ENCODE measurements at regions of chr15 and their contacts with region 1.

Region 1: DNA sequence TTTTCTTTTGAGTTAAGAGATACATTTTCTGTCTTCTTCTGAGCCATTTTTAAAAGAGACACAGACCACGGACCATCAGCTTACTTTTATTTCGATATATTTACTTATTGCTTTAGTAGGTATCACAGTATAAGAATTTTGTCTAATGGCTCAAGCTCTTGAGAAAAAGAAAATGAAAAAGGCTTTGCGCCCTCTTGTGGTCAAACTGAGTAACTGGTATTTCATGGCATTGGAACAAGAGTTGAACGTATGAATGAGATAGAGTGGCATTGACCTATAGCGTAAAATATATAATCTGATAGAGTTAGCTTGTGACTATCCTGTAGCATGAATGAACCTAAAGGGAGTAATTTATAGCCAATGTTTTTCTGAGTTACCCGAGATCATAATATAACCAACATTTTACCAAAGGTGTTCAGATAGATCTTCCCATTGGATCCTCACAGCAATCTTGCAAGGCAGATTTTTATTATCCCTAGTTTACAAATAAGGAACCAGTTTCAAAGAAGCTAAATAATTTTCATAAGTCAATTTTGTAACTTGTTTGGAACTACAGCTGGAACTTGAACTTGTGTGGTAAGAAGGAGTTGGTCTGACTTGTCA is 154.6 kb downstream of the POLR2M start:
- DNase-seq: peak; percentile 8
- ATAC-seq: peak; percentile 69
- H3K4me3 ChIP-seq: no peak overlapping the region
- H3K27ac ChIP-seq: no peak overlapping the region
- H3K4me1 ChIP-seq: no peaks in the 10 kb centered on the region
- H3K27me3 ChIP-seq: peaks cover 0 to 1% of the 10 kb centered on the region in 2 experiments; a peak in 1 of 4 replicates
- CTCF ChIP-seq: peak; percentile 63 to 75 (median 74)
- EP300 ChIP-seq: no peak
- POLR2A ChIP-seq: no peak
- RAD21 ChIP-seq: peak; percentile 59

Region 2: DNA sequence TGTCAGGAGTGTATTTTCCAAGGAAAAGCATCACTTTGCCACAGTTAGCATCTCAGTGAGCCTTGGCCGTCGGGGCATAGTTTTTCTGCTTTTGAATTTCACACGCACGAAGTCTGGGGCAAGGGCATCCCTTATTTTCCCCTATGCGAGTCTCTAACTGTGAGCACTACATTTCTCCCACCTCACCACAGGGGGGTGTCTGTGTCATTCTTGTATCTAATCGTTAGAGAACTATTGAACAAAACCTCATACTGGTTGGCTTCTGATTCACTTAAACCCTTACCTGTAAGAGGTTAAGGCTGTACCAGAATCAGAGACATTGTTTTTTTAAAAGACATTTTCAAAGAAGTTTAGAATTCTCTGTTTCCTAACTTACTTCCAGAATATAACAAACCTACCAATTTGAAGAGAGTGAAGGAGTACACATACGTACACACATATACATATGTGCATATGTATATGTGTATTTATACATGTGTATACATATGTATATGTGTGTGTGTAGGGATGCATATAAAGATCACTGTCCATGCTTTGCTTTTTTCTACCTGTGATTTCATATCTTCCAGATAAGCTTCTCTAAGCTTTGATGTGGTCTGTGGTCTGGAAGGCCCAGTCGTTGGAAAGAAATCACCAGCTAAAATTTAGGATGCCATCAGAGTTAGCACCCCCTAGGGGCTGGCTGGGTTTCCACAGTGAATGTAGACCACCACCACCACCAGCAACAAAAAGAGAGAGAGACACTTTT is 220.0 kb before region 1 on chr15:
- CTCF ChIA-PET with region 1: interaction called, 13 read pairs
- POLR2A ChIA-PET with region 1: no interaction called
- RAD21 ChIA-PET with region 1: no interaction called
- SMC1A ChIA-PET with region 1: interaction called, 6 read pairs
- in situ Hi-C with region 1: no loop called
- intact Hi-C with region 1: loop called (anchors 1 kb)
- DNase-seq: no peak
- ATAC-seq: peak; percentile 73
- H3K4me3 ChIP-seq: no peak overlapping the region
- H3K27ac ChIP-seq: no peak overlapping the region
- H3K4me1 ChIP-seq: no peaks in the 10 kb centered on the region
- H3K27me3 ChIP-seq: peaks cover 0 to 5% of the 10 kb centered on the region in 2 experiments; a peak in 2 of 4 replicates
- CTCF ChIP-seq: peak; percentile 26 to 48 (median 38); a peak in 4 of 6 replicates
- EP300 ChIP-seq: no peak
- POLR2A ChIP-seq: no peak
- RAD21 ChIP-seq: peak; percentile 43

Region 3: GRCh38 chr15:57743424-57743823 is 117.7 kb before region 1 on chr15:
- CTCF ChIA-PET with region 1: interaction called, 32 read pairs
- POLR2A ChIA-PET with region 1: no interaction called
- RAD21 ChIA-PET with region 1: interaction called, 7 read pairs
- SMC1A ChIA-PET with region 1: interaction called, 34 read pairs
- in situ Hi-C with region 1: no loop called
- intact Hi-C with region 1: no loop called
- DNase-seq: no peak
- ATAC-seq: peak; percentile 43; the same call in 1 of the 3 replicates
- H3K4me3 ChIP-seq: no peak overlapping the region
- H3K27ac ChIP-seq: no peak overlapping the region
- H3K4me1 ChIP-seq: no peaks in the 10 kb centered on the region
- H3K27me3 ChIP-seq: no peaks in the 10 kb centered on the region; a peak in 1 of 4 replicates
- CTCF ChIP-seq: peak; percentile 6 to 32 (median 23); a peak in 3 of 6 replicates
- EP300 ChIP-seq: no peak
- POLR2A ChIP-seq: no peak
- RAD21 ChIP-seq: peak; percentile 8; the same call in 1 of the 2 replicates

Region 4: DNA sequence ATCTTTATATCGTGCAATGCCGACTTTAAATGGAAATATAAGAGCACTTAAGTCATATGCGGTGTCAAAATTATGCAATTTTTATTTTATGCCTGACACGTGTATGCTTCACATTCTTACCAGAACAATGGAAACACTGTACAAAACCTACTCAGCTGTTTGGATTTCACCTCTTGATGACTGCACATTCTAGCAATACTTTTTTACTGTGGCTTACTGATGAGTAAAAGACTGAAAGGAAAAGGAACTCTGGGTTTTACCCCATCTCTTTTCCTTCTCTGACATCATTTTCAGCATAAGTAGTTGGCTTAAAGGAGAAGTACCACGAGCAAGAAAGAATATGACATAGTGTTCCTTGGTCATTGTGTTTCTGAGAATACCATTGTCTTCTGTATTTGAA is 11.8 kb before region 1 on chr15:
- CTCF ChIA-PET with region 1: interaction called, 32 read pairs
- POLR2A ChIA-PET with region 1: no interaction called
- RAD21 ChIA-PET with region 1: interaction called, 4 read pairs
- SMC1A ChIA-PET with region 1: interaction called, 7 read pairs
- in situ Hi-C with region 1: no loop called
- intact Hi-C with region 1: no loop called
- DNase-seq: no peak
- ATAC-seq: no peak
- H3K4me3 ChIP-seq: no peak overlapping the region
- H3K27ac ChIP-seq: no peak overlapping the region
- H3K4me1 ChIP-seq: no peaks in the 10 kb centered on the region
- H3K27me3 ChIP-seq: no peaks in the 10 kb centered on the region; a peak in 1 of 4 replicates
- CTCF ChIP-seq: no peak
- EP300 ChIP-seq: no peak
- POLR2A ChIP-seq: no peak
- RAD21 ChIP-seq: no peak

Region 5: GRCh38 chr15:58182460-58183163 is 321.5 kb after region 1 on chr15:
- CTCF ChIA-PET with region 1: interaction called, 15 read pairs
- POLR2A ChIA-PET with region 1: no interaction called
- RAD21 ChIA-PET with region 1: no interaction called
- SMC1A ChIA-PET with region 1: no interaction called
- in situ Hi-C with region 1: loop called (anchors 5 kb)
- intact Hi-C with region 1: loop called (anchors 1 kb)
- DNase-seq: no peak
- ATAC-seq: peak; percentile 94
- H3K4me3 ChIP-seq: no peak overlapping the region
- H3K27ac ChIP-seq: no peak overlapping the region
- H3K4me1 ChIP-seq: no peaks in the 10 kb centered on the region
- H3K27me3 ChIP-seq: no peaks in the 10 kb centered on the region
- CTCF ChIP-seq: peak; percentile 79 to 88 (median 80); a peak in 5 of 6 replicates
- EP300 ChIP-seq: no peak
- POLR2A ChIP-seq: no peak
- RAD21 ChIP-seq: peak; percentile 80

Measured in GM12878 (cell line).